Activated CD4-positive, alpha-beta T cell treated with anti-CD3 and anti-CD28 coated beads for 36 hours (primary cell): ENCODE measurements at regions of chr9 and their contacts with region 1.

Region 1: DNA sequence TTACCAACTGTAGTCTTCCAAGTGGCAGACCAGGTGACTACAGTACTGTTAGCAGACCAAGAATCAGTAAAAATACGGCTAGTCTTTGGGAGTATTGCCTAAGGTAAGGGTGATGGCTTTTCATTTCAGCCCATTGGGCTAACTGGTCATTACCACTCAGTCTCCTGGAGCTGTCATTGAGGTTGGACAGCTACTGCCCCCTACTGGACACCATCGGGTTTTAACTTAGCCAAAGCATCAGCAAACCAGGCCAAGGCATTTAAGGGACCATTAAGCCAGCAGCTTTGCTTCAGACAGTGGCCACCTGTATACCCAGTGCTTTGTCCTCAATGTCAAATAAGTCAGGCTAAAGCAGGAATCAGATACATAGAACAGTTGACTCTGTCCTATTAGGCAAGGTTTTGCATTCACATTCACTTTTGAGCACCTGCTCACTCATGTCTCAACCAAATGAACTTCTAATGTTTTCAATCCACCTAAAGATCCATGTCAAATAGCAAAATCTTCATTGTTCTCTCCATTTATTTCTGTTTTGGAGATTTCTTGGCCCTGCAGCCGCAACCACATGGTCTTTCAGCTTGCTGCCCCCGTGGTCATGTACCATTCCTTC is 117.2 kb downstream of the INVS start:
- DNase-seq: peak; percentile 71
- ATAC-seq: no peak
- H3K4me3 Mint-ChIP-seq: no peak overlapping the region
- H3K27ac Mint-ChIP-seq: no peak overlapping the region
- H3K4me1 Mint-ChIP-seq: peaks cover 3% of the 10 kb centered on the region
- H3K27me3 Mint-ChIP-seq: no peaks in the 10 kb centered on the region

Region 2: DNA sequence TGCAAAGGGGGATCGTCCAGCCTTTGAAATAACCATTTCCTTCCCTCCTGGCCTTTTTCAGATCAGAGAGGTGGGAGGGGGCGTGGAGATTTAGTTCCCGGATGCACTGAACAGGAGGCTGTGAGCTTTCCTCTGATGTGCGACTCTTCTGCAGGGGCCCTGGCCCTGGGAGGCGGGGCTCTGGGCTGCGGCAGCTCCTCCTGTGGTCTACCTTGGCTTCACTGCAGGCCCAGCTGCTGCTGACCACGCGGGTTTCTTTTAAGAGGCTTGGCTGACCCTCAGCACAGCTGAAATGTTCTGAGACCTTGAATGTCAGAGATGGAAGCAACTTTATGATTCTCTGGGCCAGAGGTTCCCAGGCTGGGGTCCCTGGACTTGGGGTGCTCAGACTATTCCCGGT is 1299.6 kb before region 1 on chr9:
- CTCF ChIA-PET with region 1: no interaction called
- POLR2A ChIA-PET with region 1: no interaction called
- intact Hi-C with region 1: no loop called
- DNase-seq: no peak
- ATAC-seq: no peak
- H3K4me3 Mint-ChIP-seq: no peak overlapping the region
- H3K27ac Mint-ChIP-seq: no peak overlapping the region
- H3K4me1 Mint-ChIP-seq: no peaks in the 10 kb centered on the region
- H3K27me3 Mint-ChIP-seq: peaks cover 4% of the 10 kb centered on the region

Region 3: DNA sequence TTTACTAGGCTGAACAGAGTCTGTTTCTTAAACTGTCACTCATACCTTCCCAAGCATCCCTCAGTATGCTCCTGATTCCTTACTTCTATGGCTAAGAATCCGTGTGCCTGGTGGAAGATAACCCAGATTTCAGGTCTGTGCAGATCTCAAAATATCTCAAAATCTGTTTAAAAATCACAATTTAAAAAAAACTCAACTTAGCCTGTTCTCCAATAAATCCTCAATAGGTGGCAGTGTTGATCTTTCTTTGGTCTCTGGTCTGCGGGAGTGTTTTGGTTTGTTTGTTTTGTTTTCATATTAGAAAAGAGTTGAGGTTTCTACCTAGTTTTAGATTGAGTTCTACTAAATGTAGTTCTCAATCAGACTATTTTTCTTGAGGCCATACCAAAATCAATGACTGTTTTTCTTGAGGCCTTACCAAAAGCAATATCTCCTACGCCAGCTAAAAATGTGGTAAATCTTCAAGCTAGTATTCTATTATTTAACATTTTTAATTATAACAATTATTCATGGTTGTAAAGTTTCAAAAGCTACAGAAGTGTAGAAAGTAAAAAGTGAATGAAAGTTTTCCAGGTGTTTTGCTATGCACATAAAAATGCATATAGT is 1053.4 kb before region 1 on chr9:
- CTCF ChIA-PET with region 1: no interaction called
- POLR2A ChIA-PET with region 1: no interaction called
- intact Hi-C with region 1: loop called in 1 of 2 experiments (anchors 10 kb)
- DNase-seq: no peak
- ATAC-seq: peak; percentile 35
- H3K4me3 Mint-ChIP-seq: no peak overlapping the region
- H3K27ac Mint-ChIP-seq: no peak overlapping the region
- H3K4me1 Mint-ChIP-seq: peaks cover 22% of the 10 kb centered on the region
- H3K27me3 Mint-ChIP-seq: peaks cover 8% of the 10 kb centered on the region

Region 4: DNA sequence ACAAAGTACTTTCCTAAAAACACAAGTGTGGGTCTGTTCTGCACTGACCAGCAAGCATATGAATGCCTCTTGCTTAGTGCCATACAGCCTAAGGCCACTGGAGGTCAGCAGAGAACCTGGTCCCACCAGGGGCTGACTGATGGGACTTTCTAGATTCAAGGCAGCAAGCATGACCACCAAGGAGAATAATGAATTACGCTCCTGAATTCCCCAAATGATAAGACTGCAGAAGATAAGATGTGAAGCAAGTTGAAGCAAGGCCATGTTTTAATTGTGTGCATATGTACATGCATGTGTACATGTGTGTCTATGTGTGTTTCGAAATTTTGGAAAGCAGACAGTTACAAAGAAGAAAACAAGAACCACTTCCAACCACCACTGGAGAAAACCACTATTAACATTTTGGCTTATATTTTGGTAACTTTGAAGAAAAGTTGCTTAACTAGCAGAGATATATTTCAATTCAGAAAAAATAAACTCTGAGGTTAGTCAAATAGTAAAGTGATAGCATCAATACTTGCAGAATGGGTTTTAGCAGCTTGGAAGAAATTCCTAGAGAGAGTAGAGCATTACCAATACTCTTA is 188.0 kb before region 1 on chr9:
- CTCF ChIA-PET with region 1: interaction called, 4 read pairs
- POLR2A ChIA-PET with region 1: no interaction called
- intact Hi-C with region 1: loop called in 1 of 2 experiments (anchors 1 kb)
- DNase-seq: peak; percentile 82
- ATAC-seq: peak; percentile 93
- H3K4me3 Mint-ChIP-seq: no peak overlapping the region
- H3K27ac Mint-ChIP-seq: no peak overlapping the region
- H3K4me1 Mint-ChIP-seq: peaks cover 3% of the 10 kb centered on the region
- H3K27me3 Mint-ChIP-seq: no peaks in the 10 kb centered on the region

Region 5: GRCh38 chr9:100084734-100085133 is 131.5 kb before region 1 on chr9:
- CTCF ChIA-PET with region 1: no interaction called
- POLR2A ChIA-PET with region 1: no interaction called
- intact Hi-C with region 1: loop called in 1 of 2 experiments (anchors 10 kb)
- DNase-seq: no peak
- ATAC-seq: peak; percentile 62
- H3K4me3 Mint-ChIP-seq: no peak overlapping the region
- H3K27ac Mint-ChIP-seq: no peak overlapping the region
- H3K4me1 Mint-ChIP-seq: peaks cover 80% of the 10 kb centered on the region
- H3K27me3 Mint-ChIP-seq: no peaks in the 10 kb centered on the region

Region 6: DNA sequence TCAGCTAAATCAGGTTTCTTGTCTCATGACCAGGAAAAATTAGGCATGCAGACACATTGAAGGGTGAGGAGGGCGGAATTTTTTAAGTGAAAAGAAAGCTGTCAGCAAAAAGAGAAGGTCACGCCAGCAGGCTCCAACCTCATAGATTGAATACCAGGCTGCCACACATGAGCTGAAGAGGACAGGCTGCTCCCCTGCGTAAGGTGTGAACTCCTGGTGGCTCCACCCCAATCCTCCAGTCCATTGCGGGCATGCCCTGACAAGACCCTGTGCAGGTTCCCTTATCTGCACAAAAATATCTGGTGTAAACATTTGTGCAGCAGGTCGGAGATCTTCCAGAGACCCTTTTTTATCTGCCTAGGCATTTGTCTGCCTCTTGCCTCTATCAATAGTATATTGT is 159.4 kb after region 1 on chr9:
- CTCF ChIA-PET with region 1: no interaction called
- POLR2A ChIA-PET with region 1: no interaction called
- intact Hi-C with region 1: no loop called
- DNase-seq: no peak
- ATAC-seq: no peak
- H3K4me3 Mint-ChIP-seq: no peak overlapping the region
- H3K27ac Mint-ChIP-seq: no peak overlapping the region
- H3K4me1 Mint-ChIP-seq: no peaks in the 10 kb centered on the region
- H3K27me3 Mint-ChIP-seq: no peaks in the 10 kb centered on the region